Activated CD4-positive, alpha-beta memory T cell treated with anti-CD3 and anti-CD28 coated beads for 36 hours (primary cell): ENCODE measurements at regions of chr3 and their contacts with region 1.

Region 1: GRCh38 chr3:10248184-10249080 is at the start of gene TATDN2:
- DNase-seq: peak; percentile 97
- H3K4me3 Mint-ChIP-seq: peak within 1 kb of the TSS; percentile 97
- H3K27ac Mint-ChIP-seq: peak within 1 kb of the TSS; percentile 98
- H3K4me1 Mint-ChIP-seq: peaks cover 61% of the 10 kb centered on the region
- H3K27me3 Mint-ChIP-seq: no peaks in the 10 kb centered on the region
- total RNA-seq, gene TATDN2: 36.9 to 39.4 TPM

Region 2: DNA sequence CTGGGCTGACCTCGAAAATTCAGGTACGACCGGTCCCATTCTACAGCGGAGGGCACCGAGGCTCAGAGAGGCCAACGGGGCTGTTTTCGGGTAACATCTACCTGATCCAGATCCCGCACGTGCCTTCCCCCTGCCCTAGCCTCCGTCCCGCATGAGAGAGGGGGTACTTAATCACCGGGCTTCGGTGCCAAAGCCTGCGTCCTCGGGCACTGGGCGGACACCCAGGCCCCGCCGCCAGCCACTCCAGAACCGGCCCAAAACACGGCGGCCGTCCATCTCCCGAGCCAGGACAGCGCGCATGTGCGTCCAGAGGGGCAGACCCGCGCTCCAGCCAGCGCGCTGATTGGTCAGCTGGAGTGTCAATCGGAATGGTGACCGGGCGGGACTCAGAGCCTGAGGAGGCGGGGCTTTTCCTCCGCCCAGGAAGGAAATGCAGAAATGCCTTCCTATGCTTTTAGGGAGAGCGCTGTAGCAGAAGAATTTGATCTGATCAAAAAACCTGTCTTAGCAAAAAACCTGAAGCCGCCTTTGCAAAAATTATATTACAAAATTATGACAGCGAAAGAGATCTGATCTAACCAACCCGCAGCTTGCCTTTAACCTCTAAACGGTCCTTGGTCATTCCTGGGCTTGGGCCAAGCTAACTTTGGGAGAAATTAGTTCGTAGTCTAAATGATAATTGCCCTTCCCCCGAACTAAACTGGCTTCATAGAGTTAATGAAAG is 404.6 kb before region 1 on chr3 and contains the start of gene RPUSD3:
- CTCF ChIA-PET with region 1: no interaction called
- POLR2A ChIA-PET with region 1: no interaction called
- intact Hi-C with region 1: loop called (anchors 2 kb)
- DNase-seq: peak; percentile 97
- H3K4me3 Mint-ChIP-seq: peak within 1 kb of the TSS; percentile 99
- H3K27ac Mint-ChIP-seq: peak within 1 kb of the TSS; percentile 90
- H3K4me1 Mint-ChIP-seq: peaks cover 26% of the 10 kb centered on the region
- H3K27me3 Mint-ChIP-seq: no peaks in the 10 kb centered on the region
- total RNA-seq, gene RPUSD3: 79.0 to 80.8 TPM

Region 3: GRCh38 chr3:10115326-10116137 is 132.9 kb before region 1 on chr3 and contains the start of gene BRK1:
- CTCF ChIA-PET with region 1: interaction called, 3 read pairs
- POLR2A ChIA-PET with region 1: interaction called, 4 read pairs
- intact Hi-C with region 1: loop called (anchors 2 kb)
- DNase-seq: peak; percentile 97
- H3K4me3 Mint-ChIP-seq: peak within 1 kb of the TSS; percentile 96
- H3K27ac Mint-ChIP-seq: peak within 1 kb of the TSS; percentile 94
- H3K4me1 Mint-ChIP-seq: peaks cover 33% of the 10 kb centered on the region
- H3K27me3 Mint-ChIP-seq: peaks cover 2% of the 10 kb centered on the region
- total RNA-seq, gene BRK1: 70.3 to 76.1 TPM

Region 4: DNA sequence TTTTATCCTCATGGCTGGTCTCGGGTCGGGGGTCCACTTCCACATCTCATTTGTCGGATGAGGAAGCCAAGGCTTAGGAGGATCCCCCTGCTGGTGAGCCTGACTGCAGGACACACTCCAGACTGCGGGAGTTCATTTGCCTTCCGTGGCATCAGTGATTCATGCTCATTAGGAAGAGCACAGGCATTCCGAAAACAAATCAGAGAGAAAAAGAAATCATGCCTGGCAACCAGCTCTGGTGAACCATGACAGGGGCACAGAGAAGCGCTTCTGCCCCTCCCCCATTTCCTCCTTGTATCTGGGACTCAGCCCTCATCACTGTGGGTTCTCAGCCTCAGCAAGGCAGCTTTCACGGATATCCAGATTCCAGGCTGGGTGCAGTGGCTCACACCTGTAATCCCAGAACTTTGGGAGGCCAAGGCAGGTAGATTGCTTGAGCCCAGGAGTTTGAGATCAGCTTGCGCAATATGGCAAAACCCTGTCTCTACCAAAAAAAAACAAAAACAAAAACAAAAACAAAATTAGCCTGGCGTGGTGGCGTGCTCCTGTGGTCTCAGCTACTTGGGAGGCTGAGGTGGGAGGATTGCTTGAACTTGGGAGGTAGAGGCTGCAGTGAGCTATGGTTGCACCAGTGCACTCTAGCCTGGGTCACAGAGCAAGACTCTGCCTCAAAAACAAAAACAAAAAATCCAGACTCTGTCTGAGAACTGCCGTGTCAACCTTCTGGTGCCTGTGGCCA is 55.3 kb before region 1 on chr3:
- CTCF ChIA-PET with region 1: interaction called, 5 read pairs
- POLR2A ChIA-PET with region 1: interaction called, 14 read pairs
- intact Hi-C with region 1: loop called (anchors 2 kb)
- DNase-seq: peak; percentile 84
- H3K4me3 Mint-ChIP-seq: peak overlapping the region; percentile 35
- H3K27ac Mint-ChIP-seq: peak overlapping the region; percentile 97
- H3K4me1 Mint-ChIP-seq: peaks cover 83% of the 10 kb centered on the region
- H3K27me3 Mint-ChIP-seq: no peaks in the 10 kb centered on the region

Region 5: GRCh38 chr3:10224784-10225665 is 23.4 kb before region 1 on chr3:
- CTCF ChIA-PET with region 1: interaction called, 4 read pairs
- POLR2A ChIA-PET with region 1: interaction called, 3 read pairs
- intact Hi-C with region 1: loop called (anchors 1 kb)
- DNase-seq: peak; percentile 84
- H3K4me3 Mint-ChIP-seq: peak overlapping the region; percentile 46
- H3K27ac Mint-ChIP-seq: peak overlapping the region; percentile 92
- H3K4me1 Mint-ChIP-seq: peaks cover 75% of the 10 kb centered on the region
- H3K27me3 Mint-ChIP-seq: no peaks in the 10 kb centered on the region

Region 6: GRCh38 chr3:10286596-10287330 is 38.3 kb after region 1 on chr3:
- CTCF ChIA-PET with region 1: interaction called, 3 read pairs
- POLR2A ChIA-PET with region 1: no interaction called
- intact Hi-C with region 1: loop called (anchors 1 kb)
- DNase-seq: peak; percentile 43
- H3K4me3 Mint-ChIP-seq: no peak overlapping the region
- H3K27ac Mint-ChIP-seq: peak overlapping the region; percentile 18
- H3K4me1 Mint-ChIP-seq: peaks cover 45% of the 10 kb centered on the region
- H3K27me3 Mint-ChIP-seq: no peaks in the 10 kb centered on the region

Region 7: DNA sequence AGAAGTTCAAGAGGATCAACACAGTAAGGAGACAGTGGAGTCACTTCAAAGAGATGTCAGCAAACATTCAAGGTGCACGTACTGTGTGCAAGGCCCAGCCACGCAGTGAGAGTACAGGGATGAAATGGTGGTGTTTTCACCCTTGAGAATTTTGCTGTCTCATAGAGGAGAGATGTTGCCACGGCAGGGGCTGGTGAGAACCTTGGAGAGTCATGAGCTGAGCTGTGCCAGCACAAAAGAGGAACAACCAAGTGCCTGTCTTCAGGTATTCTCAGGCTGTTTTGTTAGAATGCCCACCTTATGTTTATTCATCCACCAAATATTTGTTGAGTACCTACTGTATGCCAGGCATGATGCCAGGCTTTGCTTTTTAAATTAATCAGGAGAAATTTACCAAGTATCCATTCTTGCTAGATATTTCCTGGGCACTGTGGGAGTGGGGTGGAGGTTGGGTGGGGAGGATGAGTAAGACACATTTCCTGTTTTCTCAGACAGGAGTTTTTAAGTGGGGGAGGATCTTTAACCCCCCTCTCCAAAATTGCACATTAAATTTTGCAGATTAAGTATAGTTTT is 640.2 kb after region 1 on chr3:
- CTCF ChIA-PET with region 1: no interaction called
- POLR2A ChIA-PET with region 1: no interaction called
- intact Hi-C with region 1: no loop called
- DNase-seq: no peak
- H3K4me3 Mint-ChIP-seq: no peak overlapping the region
- H3K27ac Mint-ChIP-seq: no peak overlapping the region
- H3K4me1 Mint-ChIP-seq: no peaks in the 10 kb centered on the region
- H3K27me3 Mint-ChIP-seq: peaks cover 5% of the 10 kb centered on the region

Region 8: DNA sequence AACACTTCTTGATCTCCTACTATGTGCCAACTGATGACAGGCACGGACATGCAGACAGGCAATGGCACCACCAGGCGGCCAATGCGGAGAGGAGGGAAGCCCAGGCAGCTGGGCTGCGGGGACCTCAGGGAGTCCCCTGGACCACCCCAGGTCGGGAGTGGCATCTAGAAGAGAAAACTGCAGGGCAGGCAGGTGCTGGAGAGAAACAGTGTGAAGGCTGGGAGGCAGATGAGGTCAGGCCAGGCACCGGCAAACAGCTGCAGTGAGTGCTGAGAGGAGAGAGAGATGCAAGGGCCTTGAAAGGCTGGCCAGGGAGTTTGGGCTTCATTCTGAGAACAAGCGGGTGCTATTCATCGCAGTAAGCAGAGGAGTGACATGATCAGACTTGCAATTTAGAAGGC is 773.2 kb after region 1 on chr3:
- CTCF ChIA-PET with region 1: no interaction called
- POLR2A ChIA-PET with region 1: no interaction called
- intact Hi-C with region 1: no loop called
- DNase-seq: no peak
- H3K4me3 Mint-ChIP-seq: no peak overlapping the region
- H3K27ac Mint-ChIP-seq: no peak overlapping the region
- H3K4me1 Mint-ChIP-seq: no peaks in the 10 kb centered on the region
- H3K27me3 Mint-ChIP-seq: peaks cover 2% of the 10 kb centered on the region